ENCODE measurements at regions of chr20 and their contacts with region 1.

Region 1: DNA sequence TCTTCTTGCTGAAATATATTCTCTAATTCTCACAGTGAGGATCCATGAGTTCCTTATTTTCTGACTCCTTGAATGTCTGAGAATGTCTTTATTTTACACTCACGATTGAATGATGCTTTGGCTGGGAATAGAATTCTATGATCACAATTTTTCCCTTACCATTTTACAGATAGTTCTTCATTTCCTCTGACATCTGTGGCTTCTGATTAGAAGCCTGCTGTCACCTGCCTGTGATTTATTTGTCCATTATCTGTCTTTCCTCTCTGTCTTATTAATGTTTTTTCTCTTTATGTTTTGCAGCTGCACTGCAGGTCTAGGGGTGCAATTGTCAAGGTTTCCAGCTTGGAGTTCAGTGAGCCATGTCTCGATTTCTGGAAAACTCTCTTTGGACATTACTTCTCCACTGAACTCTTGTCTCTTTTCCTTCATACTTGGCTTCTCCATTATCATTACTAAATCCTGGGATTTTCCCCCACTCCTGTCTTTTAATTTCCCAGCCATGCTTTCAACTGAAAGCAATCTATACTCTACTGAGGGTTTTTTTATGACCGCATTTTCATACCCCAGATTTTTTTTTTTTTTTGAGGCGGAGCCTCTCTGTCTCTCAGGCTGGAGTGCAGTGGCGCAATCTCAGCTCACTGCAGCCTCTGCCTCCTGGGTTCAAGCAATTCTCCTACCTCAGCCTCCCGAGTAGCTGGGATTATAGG is 121.2 kb upstream of the PRND start:
- DNase-seq: no peak
- H3K4me3 ChIP-seq: no peak overlapping the region
- H3K27ac ChIP-seq: no peak overlapping the region
- H3K4me1 ChIP-seq: peaks cover 19% of the 10 kb centered on the region
- H3K27me3 ChIP-seq: no peaks in the 10 kb centered on the region
- CTCF ChIP-seq: no peak

Region 2: DNA sequence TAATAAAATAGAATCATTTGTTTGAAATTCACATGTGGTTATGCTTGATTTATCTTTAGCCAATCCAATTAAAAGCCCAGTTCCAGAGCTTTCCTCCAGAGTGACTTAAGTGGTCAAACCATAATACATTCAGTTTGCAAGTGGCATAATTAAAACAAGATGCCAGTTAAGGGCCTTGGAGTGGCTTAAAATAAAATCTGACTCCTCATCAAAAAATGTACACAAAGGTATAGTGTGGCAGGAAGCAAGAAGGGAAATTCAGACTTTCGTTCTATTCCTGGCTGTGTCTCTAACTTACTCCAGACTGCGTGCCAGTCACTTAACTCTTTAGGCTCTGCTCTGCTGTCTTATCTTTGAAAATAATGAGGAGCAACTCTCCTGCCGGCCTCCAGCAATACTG is 130.1 kb before region 1 on chr20:
- CTCF ChIA-PET with region 1: no interaction called
- POLR2A ChIA-PET with region 1: interaction called, 10 read pairs
- intact Hi-C with region 1: no loop called
- DNase-seq: peak; percentile 94
- H3K4me3 ChIP-seq: peak overlapping the region; percentile 49
- H3K27ac ChIP-seq: peak overlapping the region; percentile 73
- H3K4me1 ChIP-seq: peaks cover 54% of the 10 kb centered on the region
- H3K27me3 ChIP-seq: no peaks in the 10 kb centered on the region
- CTCF ChIP-seq: no peak; the same call in 1 of the 2 replicates

Region 3: DNA sequence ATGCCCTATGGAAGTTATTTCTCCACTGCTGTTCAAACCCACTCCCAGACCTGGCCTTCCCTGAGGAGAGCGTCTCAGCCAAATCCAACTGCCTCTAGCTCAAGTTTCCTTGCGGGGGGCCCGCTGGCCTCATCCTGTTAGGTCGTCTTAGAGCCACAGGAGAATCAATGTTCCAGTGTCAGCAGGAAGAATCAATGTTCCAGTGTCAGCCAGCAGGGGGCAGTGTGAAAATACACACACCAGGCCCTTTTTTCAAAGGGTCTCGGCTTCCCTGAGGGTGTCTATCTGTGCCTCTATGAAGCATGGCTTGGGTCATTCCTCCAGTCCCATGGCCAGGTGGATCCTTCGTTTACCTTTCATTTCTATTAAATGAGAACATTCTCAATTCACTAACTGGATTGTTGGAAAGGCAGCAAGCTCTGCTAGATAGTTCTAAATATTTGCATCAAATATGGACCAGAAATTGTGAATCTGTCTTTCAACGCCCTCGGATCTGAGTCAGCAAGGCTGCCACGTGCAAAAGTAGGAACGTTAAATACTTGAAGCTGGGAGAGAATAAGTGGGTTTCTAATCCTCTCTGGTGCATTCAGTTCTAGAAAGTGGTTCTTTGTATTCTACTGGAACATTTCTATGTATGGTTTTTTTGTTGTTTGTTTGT is 140.4 kb after region 1 on chr20:
- CTCF ChIA-PET with region 1: no interaction called
- POLR2A ChIA-PET with region 1: no interaction called
- intact Hi-C with region 1: no loop called
- DNase-seq: peak; percentile 74
- H3K4me3 ChIP-seq: no peak overlapping the region
- H3K27ac ChIP-seq: no peak overlapping the region
- H3K4me1 ChIP-seq: no peaks in the 10 kb centered on the region
- H3K27me3 ChIP-seq: peaks cover 2% of the 10 kb centered on the region
- CTCF ChIP-seq: peak; percentile 88

Measured in A673 (cell line).